ENCODE measurements at regions of chr2 and their contacts with region 1.

Region 1: GRCh38 chr2:219402665-219403515 is 15.2 kb upstream of the DNPEP start:
- DNase-seq: peak; percentile 76
- ATAC-seq: peak; percentile 70
- H3K4me3 Mint-ChIP-seq: no peak overlapping the region
- H3K27ac Mint-ChIP-seq: no peak overlapping the region
- H3K4me1 Mint-ChIP-seq: peaks cover 46% of the 10 kb centered on the region
- H3K27me3 Mint-ChIP-seq: no peaks in the 10 kb centered on the region; the same call in 1 of the 2 replicates
- CTCF ChIP-seq: peak; percentile 83; the same call in 1 of the 2 replicates

Region 2: GRCh38 chr2:219430633-219431615 is 28.0 kb after region 1 on chr2:
- CTCF ChIA-PET with region 1: interaction called, 119 read pairs
- POLR2A ChIA-PET with region 1: interaction called, 4 read pairs
- DNase-seq: no peak
- ATAC-seq: peak; percentile 36
- H3K4me3 Mint-ChIP-seq: no peak overlapping the region
- H3K27ac Mint-ChIP-seq: peak overlapping the region; percentile 69; the same call in 1 of the 2 replicates
- H3K4me1 Mint-ChIP-seq: peaks cover 8% of the 10 kb centered on the region
- H3K27me3 Mint-ChIP-seq: peaks cover 20% of the 10 kb centered on the region
- CTCF ChIP-seq: no peak

Region 3: DNA sequence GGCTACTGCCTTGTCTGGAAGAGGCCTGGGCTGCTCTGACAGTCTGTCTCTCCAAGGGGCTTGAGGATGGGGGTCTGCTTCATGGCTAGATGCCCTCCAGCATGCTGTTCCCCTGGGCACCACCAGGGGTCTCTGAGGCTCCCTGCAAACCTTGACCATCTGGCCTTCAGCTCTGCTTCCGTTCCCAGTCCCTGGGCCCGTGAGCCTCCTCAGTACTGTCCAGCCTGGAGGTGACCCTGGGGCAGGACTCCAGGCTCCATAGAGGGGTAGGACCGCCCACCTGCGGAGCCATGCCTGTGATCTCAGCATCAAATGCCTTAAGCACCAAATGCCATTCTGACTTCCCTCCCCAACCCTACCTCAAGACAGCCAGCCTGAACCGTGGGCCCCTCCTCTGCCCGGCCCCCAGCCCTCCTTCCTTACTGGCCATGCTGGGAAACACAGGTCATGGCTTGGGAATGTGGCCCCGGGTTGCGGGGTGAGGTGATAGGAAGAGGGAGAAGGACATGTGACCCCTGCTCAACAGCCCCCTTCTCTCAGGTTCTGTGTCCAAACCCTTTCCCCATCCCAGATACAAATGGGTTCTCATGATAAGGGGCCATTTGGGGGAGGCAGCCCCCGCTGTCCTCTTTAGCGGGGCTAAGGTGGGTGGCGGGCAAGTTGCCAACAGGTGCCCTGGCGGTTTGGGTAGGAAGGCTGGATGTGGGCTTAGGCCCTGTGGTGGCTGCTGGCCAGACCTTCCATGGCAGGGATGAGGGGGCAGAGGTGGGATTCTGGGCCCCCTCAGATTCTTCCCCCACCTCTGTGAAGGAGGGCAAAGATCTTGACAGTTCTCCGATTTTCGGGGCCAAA is 56.8 kb after region 1 on chr2:
- CTCF ChIA-PET with region 1: interaction called, 62 read pairs
- POLR2A ChIA-PET with region 1: no interaction called
- DNase-seq: peak; percentile 85
- ATAC-seq: peak; percentile 65
- H3K4me3 Mint-ChIP-seq: peak overlapping the region; percentile 30; the same call in 1 of the 2 replicates
- H3K27ac Mint-ChIP-seq: no peak overlapping the region; the same call in 1 of the 2 replicates
- H3K4me1 Mint-ChIP-seq: peaks cover 31% of the 10 kb centered on the region
- H3K27me3 Mint-ChIP-seq: no peaks in the 10 kb centered on the region
- CTCF ChIP-seq: peak; percentile 94

Region 4: GRCh38 chr2:219490186-219490585 is 87.3 kb after region 1 on chr2:
- CTCF ChIA-PET with region 1: interaction called, 74 read pairs
- POLR2A ChIA-PET with region 1: no interaction called
- DNase-seq: peak; percentile 62
- ATAC-seq: peak; percentile 40
- H3K4me3 Mint-ChIP-seq: no peak overlapping the region
- H3K27ac Mint-ChIP-seq: no peak overlapping the region
- H3K4me1 Mint-ChIP-seq: peaks cover 39% of the 10 kb centered on the region
- H3K27me3 Mint-ChIP-seq: peaks cover 37% of the 10 kb centered on the region
- CTCF ChIP-seq: 0 out of 2 replicates have a peak, but pooled peaks have one; percentile 25

Region 5: GRCh38 chr2:219521066-219521880 is 118.4 kb after region 1 on chr2:
- CTCF ChIA-PET with region 1: interaction called, 178 read pairs
- POLR2A ChIA-PET with region 1: no interaction called
- DNase-seq: peak; percentile 80
- ATAC-seq: peak; percentile 68
- H3K4me3 Mint-ChIP-seq: peak overlapping the region; percentile 64
- H3K27ac Mint-ChIP-seq: peak overlapping the region; percentile 58
- H3K4me1 Mint-ChIP-seq: peaks cover 64% of the 10 kb centered on the region
- H3K27me3 Mint-ChIP-seq: peaks cover 32% of the 10 kb centered on the region
- CTCF ChIP-seq: peak; percentile 49; the same call in 1 of the 2 replicates

Measured in WTC11 (cell line).